ENCODE measurements at regions of chr22 and their contacts with region 1.

Region 1: GRCh38 chr22:39532215-39533071 is at the start of gene RPS19BP1:
- DNase-seq: peak; percentile 100
- ATAC-seq: peak; percentile 77
- total RNA-seq, gene RPS19BP1: 57.6 to 60.7 TPM

Region 2: DNA sequence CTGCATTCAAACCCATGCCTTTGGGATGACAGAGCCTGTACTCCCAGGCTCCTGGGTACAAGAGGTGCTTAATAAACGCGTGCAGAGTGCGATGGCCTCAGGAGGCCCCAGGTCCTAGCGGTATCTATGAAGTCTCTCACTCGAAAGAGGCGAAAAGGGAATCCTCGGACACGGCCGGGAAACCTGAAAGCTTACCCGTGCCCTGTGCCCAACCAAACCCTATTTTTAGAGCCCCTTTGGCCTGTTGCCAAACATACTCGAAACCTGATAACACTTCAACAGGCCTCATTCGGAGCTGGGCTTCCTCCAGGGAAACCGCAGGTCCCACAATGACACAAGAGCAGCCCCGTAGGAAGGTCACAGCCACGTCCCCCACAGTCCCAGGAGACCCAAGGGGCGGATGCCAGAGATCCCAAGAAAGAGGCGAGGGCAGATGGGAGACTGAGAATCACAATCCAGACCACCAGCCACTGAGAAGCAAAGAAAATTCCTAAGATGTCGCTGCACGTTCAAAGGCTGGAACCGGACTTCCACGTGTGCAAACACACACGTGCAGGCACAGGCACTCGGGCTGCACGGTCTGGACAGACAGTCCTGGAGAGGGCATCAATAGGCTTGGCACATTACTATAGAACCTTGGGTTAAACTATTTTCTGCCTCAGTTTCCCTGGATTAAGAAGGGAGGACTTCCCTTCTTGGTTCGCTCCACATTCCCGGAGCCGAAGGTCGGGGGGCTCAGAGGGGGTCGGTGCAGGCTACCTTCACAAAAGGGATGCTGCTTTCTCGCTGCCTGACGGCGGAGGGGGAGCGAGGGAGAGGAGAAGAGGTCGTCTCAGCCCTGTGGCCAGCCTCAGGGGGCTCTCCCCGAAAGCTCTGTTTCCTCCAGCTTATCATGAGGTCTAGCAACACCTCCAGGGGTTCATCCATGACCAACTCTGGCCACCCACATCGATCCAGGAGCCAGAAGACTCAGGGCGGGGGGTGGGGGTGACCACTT is 295.8 kb before region 1 on chr22:
- intact Hi-C with region 1: no loop called
- DNase-seq: no peak
- ATAC-seq: no peak

Region 3: DNA sequence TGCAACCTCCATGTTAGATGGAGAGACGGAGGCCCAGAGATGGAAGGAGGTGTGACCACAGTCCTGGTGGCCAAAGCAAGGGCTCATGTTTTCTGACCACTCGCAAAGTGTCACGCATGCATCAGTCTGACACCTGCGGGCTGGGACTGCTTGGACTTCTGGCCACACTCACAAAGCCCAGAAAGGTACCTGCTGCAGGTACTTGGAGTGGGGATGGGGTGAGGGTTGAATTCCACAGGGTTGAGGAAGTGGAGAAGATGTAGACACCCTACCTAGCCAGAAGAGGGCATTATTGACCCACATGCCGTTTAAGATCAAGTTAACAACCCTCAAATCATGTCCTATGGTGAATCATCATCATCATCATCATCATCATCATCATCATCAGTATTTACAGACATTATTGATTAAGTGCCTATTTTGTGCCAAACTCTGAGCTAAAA is 39.2 kb before region 1 on chr22:
- intact Hi-C with region 1: loop called in 1 of 2 experiments (anchors 2 kb)
- DNase-seq: no peak
- ATAC-seq: peak; percentile 38

Region 4: GRCh38 chr22:40024201-40025061 is 492.0 kb after region 1 on chr22:
- intact Hi-C with region 1: loop called (anchors 5 to 10 kb)
- DNase-seq: peak; percentile 81 to 88
- ATAC-seq: peak; percentile 88

Measured in left colon (tissue), 2 donors.